ENCODE measurements at regions of chr12 and their contacts with region 1.

Region 1: DNA sequence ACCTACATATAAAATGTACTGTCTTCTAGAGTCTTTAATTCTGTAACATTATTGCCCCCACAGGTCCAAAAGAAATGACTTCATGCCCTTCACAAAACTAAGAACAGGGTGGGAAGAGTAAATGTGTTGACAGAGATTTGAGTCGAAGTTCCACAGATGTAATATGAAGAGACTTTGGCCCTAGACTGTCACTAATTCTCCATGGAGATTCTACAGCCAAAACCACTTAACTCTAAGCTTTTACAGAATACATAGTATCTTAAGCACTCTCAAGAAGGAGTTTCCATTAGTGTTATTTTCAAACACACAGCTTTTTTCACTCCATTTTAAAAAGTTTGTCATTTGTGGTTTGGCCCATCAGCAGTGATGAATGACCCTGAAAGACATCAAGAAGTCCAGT is 56.3 kb downstream of the ABCC9 start:
- DNase-seq: no peak
- H3K4me3 ChIP-seq: no peak overlapping the region
- H3K27ac ChIP-seq: no peak overlapping the region
- H3K4me1 ChIP-seq: no peaks in the 10 kb centered on the region
- H3K27me3 ChIP-seq: no peaks in the 10 kb centered on the region
- CTCF ChIP-seq: no peak

Region 2: GRCh38 chr12:21849878-21850277 is 35.1 kb before region 1 on chr12:
- CTCF ChIA-PET with region 1: no interaction called
- dilution Hi-C with region 1: loop called (anchors 5 kb)
- in situ Hi-C with region 1: no loop called
- intact Hi-C with region 1: no loop called
- DNase-seq: no peak
- H3K4me3 ChIP-seq: no peak overlapping the region
- H3K27ac ChIP-seq: no peak overlapping the region
- H3K4me1 ChIP-seq: no peaks in the 10 kb centered on the region
- H3K27me3 ChIP-seq: no peaks in the 10 kb centered on the region
- CTCF ChIP-seq: no peak

Region 3: GRCh38 chr12:21865846-21866245 is 19.1 kb before region 1 on chr12:
- CTCF ChIA-PET with region 1: no interaction called
- dilution Hi-C with region 1: no loop called
- in situ Hi-C with region 1: no loop called
- intact Hi-C with region 1: no loop called
- DNase-seq: no peak
- H3K4me3 ChIP-seq: no peak overlapping the region
- H3K27ac ChIP-seq: no peak overlapping the region
- H3K4me1 ChIP-seq: no peaks in the 10 kb centered on the region
- H3K27me3 ChIP-seq: no peaks in the 10 kb centered on the region
- CTCF ChIP-seq: no peak

Region 4: GRCh38 chr12:21906919-21907493 is 22.1 kb after region 1 on chr12:
- CTCF ChIA-PET with region 1: no interaction called
- dilution Hi-C with region 1: no loop called
- in situ Hi-C with region 1: no loop called
- intact Hi-C with region 1: no loop called
- DNase-seq: no peak
- H3K4me3 ChIP-seq: no peak overlapping the region
- H3K27ac ChIP-seq: no peak overlapping the region
- H3K4me1 ChIP-seq: no peaks in the 10 kb centered on the region
- H3K27me3 ChIP-seq: no peaks in the 10 kb centered on the region
- CTCF ChIP-seq: no peak

Measured in mammary epithelial cell (primary cell).